GM10248 (cell line): ENCODE measurements at regions of chr3 and their contacts with region 1.

Region 1: GRCh38 chr3:191336833-191337232 is 6.5 kb upstream of the UTS2B start:
- DNase-seq: no peak
- CTCF ChIP-seq: no peak

Region 2: GRCh38 chr3:191307341-191307740 is 29.5 kb before region 1 on chr3:
- CTCF ChIA-PET with region 1: no interaction called
- POLR2A ChIA-PET with region 1: no interaction called
- DNase-seq: no peak
- CTCF ChIP-seq: no peak

Region 3: DNA sequence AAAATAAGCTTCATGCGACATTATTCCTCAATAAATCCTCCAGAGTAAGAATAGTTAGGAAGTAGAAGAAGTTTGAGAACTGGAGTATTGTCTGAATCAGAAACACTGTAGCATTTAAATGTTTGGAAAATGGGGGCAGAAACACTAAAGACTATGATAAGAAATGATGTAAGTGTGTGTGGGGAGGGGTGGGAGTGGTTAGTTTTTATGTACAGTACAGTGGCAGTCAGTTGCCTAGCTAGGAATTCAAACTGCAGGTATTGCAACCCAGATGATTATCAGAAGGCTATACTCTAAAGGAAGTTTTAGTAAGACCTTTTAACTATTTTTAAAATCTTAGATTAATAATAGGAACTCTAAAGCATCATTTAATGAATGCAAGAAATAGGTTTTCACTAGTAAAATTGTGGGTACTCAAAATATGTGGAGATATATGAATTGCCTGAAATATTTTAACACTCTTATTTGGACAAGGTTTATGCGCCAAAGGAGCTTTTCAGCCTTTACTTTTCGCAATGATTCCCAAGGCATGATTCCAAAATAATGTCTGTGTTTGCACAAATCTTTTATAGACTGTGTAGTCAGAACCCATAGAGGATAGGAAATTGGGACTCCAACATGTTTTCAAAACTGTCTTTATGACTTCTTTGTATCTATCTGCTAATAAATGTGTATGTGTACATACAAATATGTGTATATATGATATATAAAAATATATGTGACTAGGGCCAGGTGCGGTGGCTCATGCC is 15.6 kb before region 1 on chr3:
- CTCF ChIA-PET with region 1: no interaction called
- POLR2A ChIA-PET with region 1: no interaction called
- DNase-seq: no peak
- CTCF ChIP-seq: no peak

Region 4: GRCh38 chr3:191356611-191357439 is 20.0 kb after region 1 on chr3:
- CTCF ChIA-PET with region 1: interaction called, 45 read pairs
- POLR2A ChIA-PET with region 1: interaction called, 4 read pairs
- DNase-seq: no peak
- CTCF ChIP-seq: no peak

Region 5: DNA sequence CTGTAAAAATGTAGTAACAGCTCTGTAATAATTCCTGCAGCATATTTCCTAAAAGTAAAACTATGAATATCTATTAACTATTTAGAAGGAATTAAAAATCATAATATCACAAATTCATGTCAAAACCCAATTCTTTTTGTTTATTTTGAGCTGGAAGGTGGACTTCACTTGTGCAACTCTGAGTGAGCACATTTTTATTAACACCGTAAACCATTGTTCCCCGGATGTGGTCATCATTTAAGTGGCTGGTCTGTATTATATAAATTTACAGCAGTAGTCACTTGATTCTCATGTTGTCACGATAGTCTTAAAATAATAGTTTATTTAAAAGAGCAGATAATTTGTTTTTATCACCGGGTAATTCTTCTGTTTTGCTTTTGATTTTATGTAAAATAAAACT is 36.5 kb after region 1 on chr3:
- CTCF ChIA-PET with region 1: no interaction called
- POLR2A ChIA-PET with region 1: no interaction called
- DNase-seq: no peak
- CTCF ChIP-seq: no peak

Region 6: DNA sequence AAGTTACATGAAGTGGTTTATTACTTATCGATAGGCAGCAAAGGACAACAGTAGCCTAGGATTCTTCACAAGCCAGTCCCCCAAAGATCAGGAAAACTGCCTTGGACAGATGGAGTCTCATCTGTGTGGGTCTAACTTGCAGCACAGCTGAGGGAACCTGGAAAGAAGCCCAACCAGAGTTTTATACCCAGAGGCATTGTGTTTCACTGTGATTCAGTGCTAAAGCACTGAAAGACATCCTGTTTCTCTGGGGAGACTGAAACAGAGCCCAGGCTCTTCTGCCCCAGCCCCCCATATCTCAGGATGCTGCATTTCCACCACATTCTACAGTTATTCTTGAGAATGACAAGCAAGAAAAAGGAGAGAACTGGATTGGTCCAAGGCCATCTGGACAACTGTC is 75.9 kb after region 1 on chr3:
- CTCF ChIA-PET with region 1: no interaction called
- POLR2A ChIA-PET with region 1: no interaction called
- DNase-seq: no peak
- CTCF ChIP-seq: no peak